GM10248 (cell line): ENCODE measurements at regions of chr20 and their contacts with region 1.

Region 1: DNA sequence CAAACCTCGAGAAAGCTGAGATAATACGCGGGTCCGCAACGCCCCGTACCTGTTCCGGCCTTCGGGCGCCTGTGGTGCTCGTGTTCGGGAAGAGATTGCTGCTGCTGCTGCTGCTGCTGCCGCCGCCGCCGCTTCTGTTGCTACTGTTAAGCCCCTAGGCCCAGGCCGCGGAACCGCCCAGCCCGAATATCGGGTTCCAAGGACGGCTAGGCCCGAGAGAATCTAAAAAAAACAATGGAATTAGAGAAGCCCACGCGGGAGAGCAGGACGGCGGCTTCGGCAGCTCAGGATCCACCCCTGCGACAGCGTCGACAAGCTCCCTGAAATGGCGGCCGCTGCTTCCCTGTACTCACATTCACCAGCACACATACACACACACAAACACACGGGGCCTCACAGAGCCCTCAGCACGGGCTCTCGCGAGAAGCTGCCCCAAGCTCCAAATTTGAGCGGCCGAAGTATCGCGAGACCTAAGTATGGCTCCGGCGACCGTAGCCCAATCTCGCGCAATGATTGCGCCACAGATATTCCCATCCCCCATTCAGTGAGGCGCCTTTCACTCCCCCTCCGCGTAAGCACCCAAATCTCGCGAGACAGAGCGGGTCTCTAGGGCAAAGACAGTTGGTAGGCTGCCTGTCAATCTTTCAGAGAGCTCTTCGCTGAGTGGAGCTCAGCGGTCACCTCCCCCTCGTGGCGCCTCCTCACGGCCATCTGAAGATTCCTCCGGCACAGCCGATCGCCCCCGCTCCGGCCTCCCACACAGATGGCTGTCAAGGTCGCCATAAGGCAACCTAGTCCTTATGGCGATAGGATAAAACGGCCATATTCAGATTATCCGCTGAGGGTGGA is at the start of gene RBM39:
- DNase-seq: peak; percentile 95
- CTCF ChIP-seq: peak; percentile 7

Region 2: DNA sequence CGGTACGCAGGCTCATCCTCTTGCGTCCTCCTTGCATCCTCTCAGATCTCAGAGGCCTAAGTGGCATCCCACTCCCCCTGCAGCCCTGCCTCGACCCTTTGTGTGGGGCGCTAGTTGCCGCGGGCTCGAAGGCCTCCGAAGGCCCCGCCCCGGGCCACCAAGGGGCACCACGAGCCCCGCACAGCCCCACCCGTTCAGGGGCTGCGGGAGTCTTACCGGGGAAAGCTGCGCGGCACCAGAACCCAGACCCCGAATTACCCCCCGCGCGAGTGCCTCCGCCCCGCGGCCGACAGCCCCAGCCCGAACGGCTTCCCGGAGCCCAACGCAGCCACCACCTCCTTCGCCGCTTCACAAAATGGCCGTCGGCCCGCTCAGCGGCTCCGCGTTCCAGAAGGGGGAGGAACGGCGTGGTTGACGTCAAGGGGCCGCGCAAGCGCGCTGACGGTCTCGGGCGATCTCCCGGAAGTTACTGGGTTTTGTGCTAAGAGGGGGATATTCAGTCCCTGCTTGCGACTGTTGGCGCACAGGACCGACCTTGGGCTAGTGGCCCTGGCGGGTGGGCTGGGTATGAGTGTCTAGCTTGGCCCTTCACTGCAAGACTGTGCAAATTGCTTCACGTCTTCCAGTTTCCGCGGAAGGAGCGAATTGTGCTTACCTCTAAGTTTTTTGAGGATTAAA is 77.4 kb before region 1 on chr20 and contains the starts of genes CPNE1 and RBM12:
- CTCF ChIA-PET with region 1: no interaction called
- POLR2A ChIA-PET with region 1: interaction called, 10 read pairs
- DNase-seq: peak; percentile 99
- CTCF ChIP-seq: no peak

Region 3: GRCh38 chr20:35726759-35727711 is 15.1 kb before region 1 on chr20:
- CTCF ChIA-PET with region 1: interaction called, 4 read pairs
- POLR2A ChIA-PET with region 1: interaction called, 81 read pairs
- DNase-seq: no peak
- CTCF ChIP-seq: no peak

Region 4: DNA sequence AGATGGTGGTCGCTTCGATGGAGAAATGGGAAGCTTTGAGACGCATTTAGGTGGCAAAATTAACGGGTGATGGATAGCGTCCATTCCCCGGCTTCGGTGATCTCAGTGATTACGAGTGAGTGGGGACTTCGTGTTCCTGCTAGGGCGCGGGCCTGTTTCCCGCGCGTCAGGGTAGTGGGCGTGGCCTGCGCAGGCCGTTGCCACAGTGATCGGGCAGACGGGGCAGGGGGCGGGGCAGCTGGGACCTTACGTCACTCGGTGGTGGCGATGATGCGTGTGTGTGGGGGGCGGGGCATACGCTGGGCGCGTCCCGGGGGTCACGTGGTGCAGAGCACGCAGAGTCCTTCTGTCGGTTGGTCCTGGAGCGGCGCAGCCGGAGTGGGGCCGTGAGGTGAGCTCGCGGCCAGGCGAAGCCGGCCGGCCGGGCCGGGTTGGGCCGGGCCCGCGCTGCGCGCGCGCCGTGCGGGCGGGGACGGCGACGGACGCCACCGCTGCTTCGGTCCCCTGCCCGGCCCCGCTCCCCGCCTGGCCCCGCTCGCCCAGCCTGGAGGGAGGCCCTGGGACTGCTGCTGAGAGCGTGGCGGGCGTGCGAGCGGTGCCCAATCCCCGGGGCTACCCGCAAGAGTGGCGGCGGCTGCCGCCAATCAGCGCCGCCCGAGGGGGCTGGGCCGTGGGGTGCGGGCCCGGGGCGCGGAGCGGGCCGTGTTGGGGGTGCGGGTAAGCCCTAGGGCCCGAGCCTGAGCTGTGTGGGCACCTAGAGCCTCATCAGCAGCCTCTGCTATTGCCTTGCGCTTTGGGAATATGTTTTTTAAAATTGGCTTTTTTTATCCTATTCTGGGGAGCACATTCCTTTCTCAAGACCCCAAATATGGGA is 29.8 kb after region 1 on chr20 and contains the start of gene PHF20:
- CTCF ChIA-PET with region 1: interaction called, 27 read pairs
- POLR2A ChIA-PET with region 1: interaction called, 21 read pairs
- DNase-seq: peak; percentile 96
- CTCF ChIP-seq: no peak